Right ventricle myocardium inferior (tissue), 1 donor: ENCODE measurements at regions of chr10 and their contacts with region 1.

Region 1: GRCh38 chr10:51960494-51960895 is 261.1 kb upstream of the CSTF2T start:
- DNase-seq: no peak
- ATAC-seq: peak; percentile 77

Region 2: GRCh38 chr10:51010977-51011376 is 949.5 kb before region 1 on chr10:
- intact Hi-C with region 1: loop called (anchors 5 kb)
- DNase-seq: no peak
- ATAC-seq: peak; percentile 28

Region 3: DNA sequence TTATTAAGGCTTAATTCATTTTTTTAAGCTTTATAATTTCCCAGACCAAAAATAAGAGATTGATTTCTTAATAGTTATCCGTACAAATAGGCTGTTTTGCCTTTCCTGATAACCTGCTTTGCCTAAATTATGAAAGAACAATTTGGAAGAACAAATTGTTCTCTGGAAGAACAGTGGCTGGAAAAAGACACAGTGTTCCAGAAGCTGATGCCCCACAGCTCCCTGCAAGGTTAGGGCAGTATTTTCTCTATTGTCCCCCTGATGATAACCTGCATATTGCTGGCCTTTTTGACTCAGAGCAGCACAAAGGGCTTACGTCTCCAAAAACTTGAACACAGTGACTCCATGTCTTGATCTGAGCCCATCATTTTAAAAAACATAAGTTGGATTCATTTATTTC is 412.6 kb before region 1 on chr10:
- intact Hi-C with region 1: loop called (anchors 5 kb)
- DNase-seq: no peak
- ATAC-seq: peak; percentile 68

Region 4: DNA sequence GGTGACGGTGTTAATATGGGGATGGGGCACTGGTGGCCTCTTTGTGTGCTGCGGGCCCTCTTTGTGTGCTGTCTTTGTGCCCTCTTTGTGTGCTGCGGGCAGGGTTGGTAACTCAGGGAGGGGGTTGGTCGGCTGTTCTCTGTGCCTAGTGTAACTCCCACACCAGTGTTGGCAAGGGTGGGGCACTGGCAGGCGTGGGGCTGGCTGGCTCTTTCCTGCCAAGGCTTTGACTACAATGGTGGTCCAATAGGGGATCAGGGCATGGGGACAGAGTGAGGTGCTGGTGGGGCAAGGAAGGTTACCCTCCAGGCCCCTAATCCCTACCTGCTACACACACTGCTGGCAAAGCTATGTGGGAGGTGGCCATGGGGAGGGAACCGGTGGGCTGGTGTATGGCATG is 22.5 kb after region 1 on chr10:
- intact Hi-C with region 1: no loop called
- DNase-seq: no peak
- ATAC-seq: no peak

Region 5: GRCh38 chr10:52030051-52030790 is 69.7 kb after region 1 on chr10:
- intact Hi-C with region 1: no loop called
- DNase-seq: no peak
- ATAC-seq: no peak